MCF 10A (cell line): ENCODE measurements at regions of chr2 and their contacts with region 1.

Region 1: DNA sequence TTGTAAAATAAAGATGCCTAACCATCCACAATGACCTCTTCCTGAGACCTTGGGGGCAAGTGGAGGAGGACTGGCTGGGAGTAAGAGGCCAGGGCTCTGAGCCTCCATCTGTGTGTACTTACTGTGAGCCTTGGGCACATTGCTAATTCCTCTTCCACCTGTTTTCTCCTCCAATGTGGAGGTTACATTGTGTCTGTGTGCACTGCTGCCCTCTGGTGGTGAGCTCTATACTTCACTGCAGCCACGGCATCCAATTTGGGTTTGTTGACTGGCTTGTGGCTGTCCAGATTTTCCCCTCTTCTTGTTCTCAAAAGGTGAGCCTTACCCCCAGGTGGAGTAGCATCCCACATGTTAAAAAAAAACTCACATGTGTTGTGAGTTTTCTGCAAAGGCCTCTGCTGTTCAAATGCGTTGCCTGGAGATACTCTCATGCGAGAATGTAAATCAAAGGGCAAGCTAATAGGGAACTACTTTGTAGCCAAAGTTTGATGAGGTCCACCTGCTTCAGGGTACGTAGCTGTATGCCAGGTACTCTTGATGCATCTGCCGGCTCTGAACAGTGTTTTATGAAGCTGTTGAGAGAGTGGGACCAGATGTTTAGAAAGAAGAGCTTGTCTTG is 80.8 kb downstream of the APOB start:
- DNase-seq: peak; percentile 73
- H3K4me3 Mint-ChIP-seq: no peak overlapping the region
- H3K27ac Mint-ChIP-seq: no peak overlapping the region
- H3K4me1 Mint-ChIP-seq: no peaks in the 10 kb centered on the region
- H3K27me3 Mint-ChIP-seq: peaks cover 46% of the 10 kb centered on the region
- CTCF ChIP-seq: peak; percentile 79

Region 2: DNA sequence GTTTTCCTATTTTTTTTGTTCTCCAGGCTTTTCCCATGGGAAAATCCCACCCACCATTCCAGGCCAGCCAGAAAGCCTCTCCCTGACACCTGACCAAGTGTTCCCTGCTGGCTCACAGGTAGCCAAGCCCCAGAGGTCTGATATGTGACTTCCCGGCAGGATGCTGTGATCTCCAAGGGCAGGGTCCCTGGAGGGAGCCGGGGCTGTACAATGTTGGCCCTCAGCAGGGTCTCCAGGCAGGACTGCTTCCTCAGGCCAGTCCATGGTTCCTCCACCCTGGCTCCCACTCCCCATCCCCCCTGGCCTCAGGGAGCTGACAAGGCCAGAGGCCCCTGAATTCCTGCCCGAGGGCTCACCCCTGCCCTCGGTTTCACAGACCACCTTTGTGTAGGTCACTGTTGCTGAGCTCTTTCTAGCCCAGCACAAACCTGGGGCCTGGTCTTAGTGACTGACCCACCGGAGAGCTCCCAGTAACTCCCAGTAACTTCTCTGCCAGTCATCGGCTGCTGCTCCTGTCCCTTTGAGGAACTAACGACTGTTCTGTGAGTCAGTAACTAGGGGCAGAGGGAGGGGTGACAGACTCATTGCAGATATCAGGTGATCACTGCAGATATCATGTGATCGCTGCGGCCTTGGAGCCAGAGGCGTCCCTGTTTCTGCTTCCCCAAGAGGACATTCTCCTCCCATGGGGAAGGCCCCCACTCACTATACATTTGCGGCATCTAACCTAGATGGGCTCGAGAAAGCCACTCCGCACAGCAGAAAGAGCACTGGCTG is 776.8 kb before region 1 on chr2:
- CTCF ChIA-PET with region 1: no interaction called
- POLR2A ChIA-PET with region 1: no interaction called
- intact Hi-C with region 1: no loop called
- DNase-seq: no peak
- H3K4me3 Mint-ChIP-seq: no peak overlapping the region
- H3K27ac Mint-ChIP-seq: peak overlapping the region; percentile 46
- H3K4me1 Mint-ChIP-seq: peaks cover 28% of the 10 kb centered on the region
- H3K27me3 Mint-ChIP-seq: no peaks in the 10 kb centered on the region
- CTCF ChIP-seq: no peak

Region 3: DNA sequence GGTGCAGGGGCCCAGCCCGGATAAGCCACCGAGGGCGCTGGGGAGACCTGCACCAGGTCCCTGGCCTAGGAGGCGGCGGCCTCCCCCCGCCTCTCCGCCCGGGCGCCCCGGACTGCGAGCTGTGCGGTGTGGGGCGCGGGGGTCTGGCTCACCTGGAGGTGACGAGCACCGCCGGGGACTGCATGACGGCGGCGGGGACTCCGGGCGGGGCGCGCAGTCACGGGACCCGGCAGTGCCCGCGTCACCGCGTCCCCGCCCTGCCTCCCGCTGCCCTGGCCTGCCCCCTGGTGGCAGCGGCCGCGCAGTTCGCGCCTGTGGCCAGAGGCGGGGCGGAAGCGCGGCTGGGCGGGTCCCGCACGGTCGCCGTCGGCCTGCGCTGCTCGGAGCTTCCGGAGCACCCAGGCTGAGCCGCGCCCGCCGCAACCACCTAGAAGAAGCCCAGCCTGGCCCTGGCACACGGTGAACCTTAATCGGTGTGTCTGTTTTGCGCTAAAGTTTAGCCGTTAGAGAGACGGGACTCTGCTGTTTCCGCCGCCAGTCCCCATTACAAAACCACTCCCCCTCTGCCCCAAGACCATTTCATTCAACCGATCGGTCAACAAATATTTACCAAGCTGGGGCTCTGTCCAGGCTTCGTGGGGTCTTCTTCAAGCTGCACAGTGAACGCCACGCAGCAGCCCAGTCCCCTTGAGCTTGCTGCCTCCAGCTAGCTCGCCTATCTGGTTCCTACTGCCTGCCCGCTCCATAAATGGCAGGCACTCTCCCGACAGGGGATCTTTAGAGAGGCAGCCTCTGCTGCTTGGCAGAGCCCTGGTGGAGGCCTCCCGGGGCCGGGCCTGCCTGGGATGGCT is 311.9 kb before region 1 on chr2 and contains the start of gene HS1BP3:
- CTCF ChIA-PET with region 1: interaction called, 10 read pairs
- POLR2A ChIA-PET with region 1: no interaction called
- intact Hi-C with region 1: no loop called
- DNase-seq: peak; percentile 81
- H3K4me3 Mint-ChIP-seq: peak within 1 kb of the TSS; percentile 82
- H3K27ac Mint-ChIP-seq: peak within 1 kb of the TSS; percentile 62
- H3K4me1 Mint-ChIP-seq: peaks cover 22% of the 10 kb centered on the region
- H3K27me3 Mint-ChIP-seq: peaks cover 12% of the 10 kb centered on the region
- CTCF ChIP-seq: peak; percentile 89
- total RNA-seq, gene HS1BP3: 10.0 and 25.1 TPM in 2 replicates

Region 4: GRCh38 chr2:20723543-20723942 is 239.5 kb before region 1 on chr2:
- CTCF ChIA-PET with region 1: interaction called, 13 read pairs
- POLR2A ChIA-PET with region 1: no interaction called
- intact Hi-C with region 1: no loop called
- DNase-seq: no peak
- H3K4me3 Mint-ChIP-seq: no peak overlapping the region
- H3K27ac Mint-ChIP-seq: no peak overlapping the region
- H3K4me1 Mint-ChIP-seq: peaks cover 4% of the 10 kb centered on the region
- H3K27me3 Mint-ChIP-seq: no peaks in the 10 kb centered on the region
- CTCF ChIP-seq: no peak

Region 5: GRCh38 chr2:20771299-20771698 is 191.7 kb before region 1 on chr2:
- CTCF ChIA-PET with region 1: interaction called, 20 read pairs
- POLR2A ChIA-PET with region 1: no interaction called
- intact Hi-C with region 1: no loop called
- DNase-seq: no peak
- H3K4me3 Mint-ChIP-seq: no peak overlapping the region
- H3K27ac Mint-ChIP-seq: no peak overlapping the region
- H3K4me1 Mint-ChIP-seq: no peaks in the 10 kb centered on the region
- H3K27me3 Mint-ChIP-seq: no peaks in the 10 kb centered on the region
- CTCF ChIP-seq: no peak

Region 6: GRCh38 chr2:20976527-20976926 is 13.5 kb after region 1 on chr2:
- CTCF ChIA-PET with region 1: interaction called, 25 read pairs
- POLR2A ChIA-PET with region 1: no interaction called
- intact Hi-C with region 1: no loop called
- DNase-seq: no peak
- H3K4me3 Mint-ChIP-seq: no peak overlapping the region
- H3K27ac Mint-ChIP-seq: no peak overlapping the region
- H3K4me1 Mint-ChIP-seq: no peaks in the 10 kb centered on the region
- H3K27me3 Mint-ChIP-seq: no peaks in the 10 kb centered on the region
- CTCF ChIP-seq: no peak

Region 7: DNA sequence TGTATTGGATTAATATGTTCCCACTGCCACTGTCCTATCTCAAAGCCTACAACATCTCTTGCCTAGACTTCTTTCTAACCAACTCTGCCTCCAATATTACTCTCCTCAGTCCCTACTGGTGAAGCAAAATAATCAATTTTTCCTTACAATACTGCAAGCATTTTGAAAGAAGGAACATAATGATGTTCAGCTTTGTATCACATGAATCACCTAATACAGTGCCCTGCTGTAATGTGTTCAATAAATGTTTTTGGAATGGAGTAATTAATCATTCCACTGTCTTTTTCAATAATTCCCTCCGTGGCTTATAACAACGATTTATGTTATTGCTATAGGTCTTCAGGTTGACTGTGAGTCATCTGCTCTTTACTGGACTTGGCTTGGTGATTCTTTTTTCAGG is 517.1 kb after region 1 on chr2:
- CTCF ChIA-PET with region 1: no interaction called
- POLR2A ChIA-PET with region 1: no interaction called
- intact Hi-C with region 1: no loop called
- DNase-seq: no peak
- H3K4me3 Mint-ChIP-seq: no peak overlapping the region
- H3K27ac Mint-ChIP-seq: no peak overlapping the region
- H3K4me1 Mint-ChIP-seq: no peaks in the 10 kb centered on the region
- H3K27me3 Mint-ChIP-seq: no peaks in the 10 kb centered on the region
- CTCF ChIP-seq: no peak